H1 (cell line): ENCODE measurements at regions of chr12 and their contacts with region 1.

Region 1: GRCh38 chr12:54259194-54260011 is 20.5 kb downstream of the CBX5 start:
- DNase-seq: peak; percentile 89
- H3K4me3 ChIP-seq: peak overlapping the region; percentile 35 to 56 (median 46)
- H3K27ac ChIP-seq: peak overlapping the region; percentile 97
- H3K4me1 ChIP-seq: peaks cover 3 to 23% (median 15%) of the 10 kb centered on the region in 4 experiments
- H3K27me3 ChIP-seq: no peaks in the 10 kb centered on the region
- CTCF ChIP-seq: no peak
- EP300 ChIP-seq: peak; percentile 59 to 84; a peak in 2 of 3 replicates
- POLR2A ChIP-seq: peak; percentile 84 to 85
- RAD21 ChIP-seq: 0 out of 4 replicates have a peak, but pooled peaks of 1 of the 2 experiments have one; percentile 10

Region 2: DNA sequence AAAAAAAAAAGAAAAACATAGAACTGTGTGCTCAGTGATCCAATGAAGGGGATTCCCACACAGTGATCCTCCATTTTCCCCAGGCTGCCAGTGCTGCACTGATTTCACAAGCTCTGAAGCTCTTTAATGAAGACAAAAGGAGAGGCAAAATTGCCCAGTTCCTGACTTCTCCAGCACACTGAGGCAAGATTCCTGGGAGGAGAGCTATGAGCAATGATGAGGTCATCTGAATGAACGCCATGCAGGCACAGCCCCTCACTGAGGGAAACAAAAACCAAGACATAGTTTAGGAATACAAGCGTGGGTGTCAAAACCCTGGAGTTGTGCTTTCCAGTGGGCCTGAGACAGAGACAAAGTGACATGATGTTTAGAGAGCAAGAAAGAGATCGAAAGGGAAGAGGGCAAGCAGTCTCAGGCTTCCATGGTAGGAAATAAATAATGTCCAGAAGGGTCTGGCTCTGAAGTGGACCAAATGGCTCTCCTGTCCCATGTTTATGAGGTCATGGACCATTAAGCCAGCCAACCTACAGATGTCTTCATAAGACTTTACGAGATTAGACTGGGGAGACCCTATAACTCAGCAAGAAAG is 29.7 kb before region 1 on chr12:
- CTCF ChIA-PET with region 1: interaction called, 6 read pairs
- POLR2A ChIA-PET with region 1: interaction called, 22 read pairs
- DNase-seq: no peak
- H3K4me3 ChIP-seq: no peak overlapping the region
- H3K27ac ChIP-seq: 0 out of 2 replicates have a peak overlapping the region, but pooled peaks have one; percentile 0
- H3K4me1 ChIP-seq: no peaks in the 10 kb centered on the region
- H3K27me3 ChIP-seq: no peaks in the 10 kb centered on the region
- CTCF ChIP-seq: no peak
- EP300 ChIP-seq: no peak
- POLR2A ChIP-seq: no peak
- RAD21 ChIP-seq: no peak

Region 3: DNA sequence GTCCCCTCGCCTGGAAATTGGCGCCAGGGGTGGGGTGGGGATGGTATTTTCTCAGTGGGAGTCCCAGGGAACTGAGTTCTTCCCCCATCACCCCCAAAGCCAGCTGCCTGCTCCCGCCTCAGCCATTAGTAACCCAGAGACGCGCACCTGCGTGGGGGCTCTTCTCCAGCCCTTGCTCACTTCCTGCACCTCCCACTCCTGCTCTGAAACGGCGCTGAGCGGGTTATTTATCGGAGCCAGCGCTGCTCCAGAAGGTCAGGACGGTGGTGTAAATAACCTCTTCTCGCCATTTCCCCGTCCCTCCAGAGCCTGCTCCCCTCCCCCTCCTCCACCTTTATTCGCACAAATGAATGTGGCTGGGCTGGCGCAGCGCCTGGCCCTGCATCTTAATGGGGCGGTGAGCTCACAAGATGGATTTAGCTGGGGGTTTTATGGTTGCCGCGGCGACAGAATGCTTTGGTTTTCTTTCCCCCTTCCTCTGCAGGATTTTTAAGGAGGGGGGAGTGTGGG is 92.7 kb after region 1 on chr12:
- CTCF ChIA-PET with region 1: interaction called, 6 read pairs
- POLR2A ChIA-PET with region 1: interaction called, 12 read pairs
- DNase-seq: peak; percentile 50 to 70
- H3K4me3 ChIP-seq: peak overlapping the region; percentile 44 to 64 (median 62)
- H3K27ac ChIP-seq: peak overlapping the region; percentile 61
- H3K4me1 ChIP-seq: peaks cover 27 to 69% (median 33%) of the 10 kb centered on the region in 4 experiments
- H3K27me3 ChIP-seq: peaks cover 0 to 9% (median 4%) of the 10 kb centered on the region in 4 experiments; a peak in 3 of 7 replicates
- CTCF ChIP-seq: no peak
- EP300 ChIP-seq: no peak
- POLR2A ChIP-seq: peak in 1 of 2 experiments; percentile 41; a peak in 1 of 3 replicates
- RAD21 ChIP-seq: no peak